ENCODE measurements at regions of chr9 and their contacts with region 1.

Region 1: GRCh38 chr9:128007566-128008138 is 26.9 kb upstream of the EEIG1 start:
- DNase-seq: peak; percentile 82 to 97 (median 91)
- ATAC-seq: peak; percentile 87
- H3K4me3 ChIP-seq: peak overlapping the region; percentile 37
- H3K4me3 Mint-ChIP-seq: peak overlapping the region; percentile 76
- H3K27ac ChIP-seq: peak overlapping the region; percentile 65 to 97
- H3K27ac Mint-ChIP-seq: peak overlapping the region; percentile 96
- H3K4me1 ChIP-seq: peaks cover 89% of the 10 kb centered on the region
- H3K4me1 Mint-ChIP-seq: peaks cover 81% of the 10 kb centered on the region
- H3K27me3 ChIP-seq: no peaks in the 10 kb centered on the region
- H3K27me3 Mint-ChIP-seq: no peaks in the 10 kb centered on the region
- CTCF ChIP-seq: no peak

Region 2: DNA sequence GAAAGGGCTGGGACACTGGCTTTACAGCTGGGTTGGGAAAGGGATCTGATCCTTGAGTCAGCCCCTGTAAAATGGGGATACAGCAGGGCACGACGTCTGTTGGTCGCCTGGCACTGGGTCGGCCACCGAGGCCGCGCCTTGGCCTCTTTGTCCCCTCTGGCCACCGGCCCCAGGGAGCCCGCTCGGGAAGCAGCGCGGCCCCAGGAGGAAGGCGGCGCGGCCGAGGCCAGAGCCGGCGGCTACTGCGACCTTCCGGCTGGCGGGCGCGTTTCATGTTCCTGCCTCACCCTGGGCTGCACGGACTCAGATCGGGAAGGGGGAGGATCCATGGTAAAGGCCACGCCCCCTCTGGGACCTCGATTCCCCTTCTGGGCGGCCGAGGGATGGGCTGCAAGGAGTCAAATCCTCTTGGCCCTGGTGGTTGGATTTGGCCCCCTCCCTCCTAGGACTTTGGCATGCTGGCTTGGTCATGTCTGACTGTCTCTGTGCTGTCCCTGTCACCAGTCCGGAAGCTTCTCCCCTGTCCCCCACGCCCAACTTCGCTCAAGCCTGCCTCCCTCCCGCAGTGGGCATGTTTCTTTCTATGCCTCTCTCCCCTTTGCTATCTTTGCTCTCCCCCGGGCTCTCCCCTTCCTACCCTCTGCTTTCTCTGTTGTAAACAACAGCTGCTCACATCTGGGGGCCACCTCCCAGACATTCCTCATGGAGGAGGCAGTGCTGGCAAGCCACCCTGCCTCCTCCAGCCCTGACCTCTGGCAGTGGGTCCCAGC is 179.2 kb before region 1 on chr9:
- CTCF ChIA-PET with region 1: no interaction called
- POLR2A ChIA-PET with region 1: no interaction called
- intact Hi-C with region 1: no loop called
- DNase-seq: peak in 1 of 14 experiments; percentile 17
- ATAC-seq: no peak
- H3K4me3 ChIP-seq: no peak overlapping the region
- H3K4me3 Mint-ChIP-seq: no peak overlapping the region
- H3K27ac ChIP-seq: no peak overlapping the region
- H3K27ac Mint-ChIP-seq: no peak overlapping the region
- H3K4me1 ChIP-seq: peaks cover 4% of the 10 kb centered on the region
- H3K4me1 Mint-ChIP-seq: peaks cover 5% of the 10 kb centered on the region
- H3K27me3 ChIP-seq: no peaks in the 10 kb centered on the region
- H3K27me3 Mint-ChIP-seq: no peaks in the 10 kb centered on the region
- CTCF ChIP-seq: no peak

Region 3: DNA sequence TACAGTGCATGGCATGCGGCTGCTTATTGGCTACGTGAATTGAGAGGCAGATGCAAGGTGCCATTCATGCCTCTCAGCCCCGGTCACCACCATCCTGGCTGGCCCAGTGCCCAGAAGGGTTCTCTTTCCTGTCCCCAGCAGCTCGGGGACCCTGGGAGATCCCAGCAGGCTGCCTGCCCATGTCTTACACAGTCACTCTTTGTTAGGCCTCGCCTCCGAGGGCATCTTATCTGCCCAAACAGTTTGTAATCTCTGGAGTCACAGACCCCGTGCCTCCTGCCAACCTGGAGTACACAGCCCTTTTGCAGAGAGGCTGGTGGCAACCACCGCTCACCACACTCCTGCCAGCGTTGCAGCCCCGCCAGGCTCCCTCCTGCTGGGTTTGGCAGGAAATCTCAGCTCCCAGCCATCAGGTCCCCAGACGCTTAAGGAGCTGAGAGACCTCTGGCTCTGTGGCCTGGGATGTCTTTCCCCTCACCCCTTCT is 123.2 kb before region 1 on chr9:
- CTCF ChIA-PET with region 1: no interaction called
- POLR2A ChIA-PET with region 1: no interaction called
- intact Hi-C with region 1: no loop called
- DNase-seq: no peak
- ATAC-seq: no peak
- H3K4me3 ChIP-seq: no peak overlapping the region
- H3K4me3 Mint-ChIP-seq: no peak overlapping the region
- H3K27ac ChIP-seq: no peak overlapping the region
- H3K27ac Mint-ChIP-seq: peak overlapping the region; percentile 44
- H3K4me1 ChIP-seq: peaks cover 6% of the 10 kb centered on the region
- H3K4me1 Mint-ChIP-seq: peaks cover 5% of the 10 kb centered on the region
- H3K27me3 ChIP-seq: no peaks in the 10 kb centered on the region
- H3K27me3 Mint-ChIP-seq: no peaks in the 10 kb centered on the region
- CTCF ChIP-seq: no peak

Region 4: GRCh38 chr9:128020692-128021091 is 13.0 kb after region 1 on chr9:
- CTCF ChIA-PET with region 1: no interaction called
- POLR2A ChIA-PET with region 1: interaction called, 253 read pairs
- intact Hi-C with region 1: loop called in 1 of 2 experiments (anchors 1 kb)
- DNase-seq: no peak
- ATAC-seq: no peak
- H3K4me3 ChIP-seq: no peak overlapping the region
- H3K4me3 Mint-ChIP-seq: peak overlapping the region; percentile 15
- H3K27ac ChIP-seq: peak overlapping the region in 1 of 2 donors; percentile 48
- H3K27ac Mint-ChIP-seq: peak overlapping the region; percentile 94
- H3K4me1 ChIP-seq: peaks cover 64% of the 10 kb centered on the region
- H3K4me1 Mint-ChIP-seq: peaks cover 76% of the 10 kb centered on the region
- H3K27me3 ChIP-seq: no peaks in the 10 kb centered on the region
- H3K27me3 Mint-ChIP-seq: no peaks in the 10 kb centered on the region
- CTCF ChIP-seq: no peak

Region 5: DNA sequence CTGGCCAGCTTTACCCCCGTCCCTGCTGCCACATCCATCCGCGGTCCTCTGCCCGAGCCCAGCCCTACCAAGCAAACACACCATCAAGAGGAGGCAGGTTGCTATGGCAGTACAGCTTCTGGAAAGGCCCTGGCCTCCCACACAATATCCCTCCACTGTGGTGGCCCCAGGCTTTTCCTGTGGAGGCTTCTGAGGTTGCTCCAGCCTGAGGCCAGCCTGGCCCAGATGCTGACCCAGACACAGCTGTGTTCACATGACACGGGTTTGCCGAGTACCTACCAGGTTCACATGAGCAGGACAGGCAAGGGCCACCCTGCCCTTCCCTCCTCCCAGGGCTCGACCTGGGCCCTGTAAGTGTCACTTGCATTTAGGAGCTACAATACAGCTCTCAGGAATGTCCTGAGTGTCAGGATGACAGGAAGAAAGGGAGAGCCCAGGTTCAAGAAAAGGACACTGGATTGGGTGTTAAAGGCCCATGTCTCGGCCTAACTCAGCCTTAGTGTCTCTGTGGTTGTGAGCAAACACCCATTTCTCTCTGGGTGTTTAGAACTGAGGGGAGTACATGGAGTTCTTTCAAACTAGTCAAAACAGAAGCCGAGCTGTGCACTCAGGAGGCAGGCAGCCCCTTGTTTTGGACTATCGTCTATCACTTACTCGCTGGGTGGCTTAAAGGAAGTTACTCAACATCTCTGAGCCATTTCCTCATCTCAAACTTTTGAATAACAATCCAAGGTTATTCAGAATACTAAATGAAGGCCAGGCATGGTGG is 19.3 kb after region 1 on chr9:
- CTCF ChIA-PET with region 1: interaction called, 4 read pairs
- POLR2A ChIA-PET with region 1: interaction called, 253 read pairs
- intact Hi-C with region 1: loop called (anchors 1 kb)
- DNase-seq: peak in 13 of 14 experiments; percentile 30 to 75 (median 48)
- ATAC-seq: peak; percentile 10
- H3K4me3 ChIP-seq: peak overlapping the region; percentile 50
- H3K4me3 Mint-ChIP-seq: peak overlapping the region; percentile 80
- H3K27ac ChIP-seq: peak overlapping the region; percentile 93 to 94
- H3K27ac Mint-ChIP-seq: peak overlapping the region; percentile 94
- H3K4me1 ChIP-seq: peaks cover 100% of the 10 kb centered on the region
- H3K4me1 Mint-ChIP-seq: peaks cover 92% of the 10 kb centered on the region
- H3K27me3 ChIP-seq: no peaks in the 10 kb centered on the region
- H3K27me3 Mint-ChIP-seq: no peaks in the 10 kb centered on the region
- CTCF ChIP-seq: no peak

Region 6: DNA sequence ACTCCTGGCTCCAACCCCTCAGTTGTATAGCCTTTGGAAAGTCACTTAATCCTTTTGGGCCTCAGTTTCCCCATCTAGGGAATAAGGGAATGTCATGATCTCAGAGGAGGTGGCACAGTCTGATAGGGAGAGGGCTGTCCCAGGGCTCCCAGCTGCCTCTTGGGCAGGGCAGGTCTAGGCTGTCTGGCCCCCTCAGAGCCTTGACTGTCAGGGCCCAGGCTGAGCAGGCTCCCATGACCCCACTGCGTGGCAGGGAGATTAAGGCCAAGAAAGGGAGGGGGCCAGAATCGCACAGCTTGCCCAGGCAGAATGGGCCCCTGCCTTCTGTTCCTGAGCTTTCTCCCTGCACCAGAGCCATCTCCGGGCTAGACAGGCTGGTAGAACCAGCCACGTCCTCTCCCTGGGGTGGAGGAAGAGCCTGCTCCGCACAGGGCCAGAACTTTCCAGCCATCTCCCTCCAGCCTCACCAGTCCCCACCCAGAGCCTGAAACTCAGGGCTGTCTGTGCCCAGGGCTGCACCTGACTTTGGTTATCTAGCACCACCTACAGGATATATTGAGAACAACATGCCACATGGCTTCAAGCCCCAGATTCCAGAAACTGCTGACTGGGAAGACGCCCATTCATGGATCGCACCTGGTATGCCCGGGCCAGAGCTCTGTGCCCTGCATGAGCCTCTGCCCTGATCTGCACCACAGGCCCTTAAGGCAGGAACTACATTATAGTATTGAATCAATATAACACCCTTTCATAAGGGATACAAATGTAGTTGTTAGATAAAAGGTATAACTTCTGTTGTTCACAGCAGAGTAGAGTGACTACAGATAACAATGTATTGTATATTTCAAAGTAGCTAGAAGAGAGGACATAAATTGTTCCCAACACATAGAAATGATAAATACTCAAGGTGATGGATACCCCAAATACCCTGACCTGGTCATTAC is 27.4 kb after region 1 on chr9:
- CTCF ChIA-PET with region 1: interaction called, 7 read pairs
- POLR2A ChIA-PET with region 1: interaction called, 253 read pairs
- intact Hi-C with region 1: no loop called
- DNase-seq: peak; percentile 45 to 90 (median 58)
- ATAC-seq: peak; percentile 42
- H3K4me3 ChIP-seq: no peak overlapping the region
- H3K4me3 Mint-ChIP-seq: peak overlapping the region; percentile 70
- H3K27ac ChIP-seq: peak overlapping the region in 1 of 2 donors; percentile 61
- H3K27ac Mint-ChIP-seq: peak overlapping the region; percentile 78
- H3K4me1 ChIP-seq: peaks cover 54% of the 10 kb centered on the region
- H3K4me1 Mint-ChIP-seq: peaks cover 42% of the 10 kb centered on the region
- H3K27me3 ChIP-seq: no peaks in the 10 kb centered on the region
- H3K27me3 Mint-ChIP-seq: no peaks in the 10 kb centered on the region
- CTCF ChIP-seq: peak; percentile 90